PC-3 (cell line): ENCODE measurements at regions of chr3 and their contacts with region 1.

Region 1: DNA sequence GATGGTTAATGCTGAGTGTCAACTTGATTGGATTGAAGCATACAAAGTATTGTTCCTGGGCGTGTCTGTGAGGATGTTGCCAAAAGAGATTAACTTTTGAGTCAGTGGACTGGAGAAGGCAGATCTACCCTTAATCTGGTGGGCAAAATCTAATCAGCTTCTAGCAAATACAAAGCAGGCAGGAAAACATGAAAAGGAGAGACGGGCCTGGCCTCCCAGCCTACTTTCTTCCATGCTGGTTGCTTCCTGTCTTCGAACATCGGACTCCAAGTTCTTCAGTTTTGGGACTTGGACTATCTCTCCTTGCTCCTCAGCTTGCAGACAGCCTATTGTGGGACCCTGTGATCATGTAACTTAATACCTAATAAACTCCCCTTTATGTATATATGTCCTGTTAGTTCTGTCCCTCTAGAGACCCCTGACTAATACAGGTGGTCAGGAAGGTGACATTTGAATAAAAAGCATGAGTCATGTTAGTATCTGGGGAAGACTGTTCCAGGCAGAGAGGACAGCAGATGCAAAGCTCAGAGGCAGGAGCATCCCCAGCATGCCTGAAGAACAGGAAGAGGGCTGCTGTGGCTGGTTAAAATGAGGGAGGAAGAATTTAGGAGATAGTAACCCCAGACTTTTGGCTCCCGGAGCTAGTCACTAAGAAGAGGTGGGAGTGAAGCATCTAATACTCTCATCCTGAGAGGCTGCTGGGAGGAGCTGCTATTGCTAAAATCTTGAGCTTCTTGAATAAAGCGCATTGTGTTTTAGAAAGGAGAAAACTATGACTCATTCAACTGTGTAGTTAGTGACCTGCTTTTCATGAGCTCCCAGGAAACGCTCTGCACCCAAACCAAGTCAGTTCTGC is 207.4 kb upstream of the HES1 start:
- DNase-seq: peak; percentile 87
- ATAC-seq: peak; percentile 94
- H3K4me3 ChIP-seq: peak overlapping the region; percentile 6; the same call in 1 of the 2 replicates
- H3K27ac ChIP-seq: peak overlapping the region; percentile 88
- H3K4me1 ChIP-seq: peaks cover 28% of the 10 kb centered on the region
- H3K27me3 ChIP-seq: no peaks in the 10 kb centered on the region
- CTCF ChIP-seq: no peak

Region 2: DNA sequence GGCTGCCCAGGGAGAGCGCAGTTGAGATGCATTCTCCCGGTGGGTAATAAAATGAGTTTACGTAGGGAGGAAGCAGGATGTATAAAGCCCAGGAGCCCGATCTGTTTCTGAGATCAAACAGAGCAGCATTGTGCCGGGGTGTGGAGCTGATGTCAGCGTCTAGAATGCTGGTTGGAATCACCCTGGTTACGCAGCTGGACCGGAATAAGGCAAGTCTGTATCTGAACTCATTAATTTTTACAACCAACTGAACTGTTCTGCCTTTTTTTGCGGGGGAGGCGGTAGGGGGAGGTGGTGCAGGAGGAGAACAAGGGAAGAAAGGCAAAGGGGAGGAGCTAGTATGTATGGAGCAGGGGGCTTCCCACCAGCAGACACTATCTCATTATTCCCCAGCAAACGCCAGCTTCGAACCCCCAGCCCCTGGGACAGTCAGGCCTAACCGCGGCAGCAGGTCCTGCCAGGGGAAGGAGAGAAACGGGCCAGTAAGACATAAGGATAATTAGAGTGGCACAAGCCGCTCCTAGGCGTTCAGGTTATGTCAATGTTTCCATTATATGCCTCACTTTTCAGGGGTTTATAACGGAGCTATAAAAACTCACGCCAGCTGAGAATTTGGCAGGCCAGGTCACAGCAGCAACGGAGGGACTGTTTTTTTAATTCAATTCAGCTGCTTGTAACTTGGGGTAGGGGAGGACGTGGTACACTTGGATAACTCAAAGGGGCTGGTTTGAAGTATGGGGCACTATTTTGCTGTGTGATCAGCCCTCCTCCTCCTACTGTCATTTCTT is 32.1 kb after region 1 on chr3:
- CTCF ChIA-PET with region 1: no interaction called
- POLR2A ChIA-PET with region 1: no interaction called
- intact Hi-C with region 1: loop called (anchors 2 kb)
- DNase-seq: peak; percentile 66
- ATAC-seq: peak; percentile 89
- H3K4me3 ChIP-seq: no peak overlapping the region
- H3K27ac ChIP-seq: peak overlapping the region; percentile 55
- H3K4me1 ChIP-seq: peaks cover 11% of the 10 kb centered on the region
- H3K27me3 ChIP-seq: no peaks in the 10 kb centered on the region
- CTCF ChIP-seq: no peak